GM12878 (cell line): ENCODE measurements at regions of chr1 and their contacts with region 1.

Region 1: DNA sequence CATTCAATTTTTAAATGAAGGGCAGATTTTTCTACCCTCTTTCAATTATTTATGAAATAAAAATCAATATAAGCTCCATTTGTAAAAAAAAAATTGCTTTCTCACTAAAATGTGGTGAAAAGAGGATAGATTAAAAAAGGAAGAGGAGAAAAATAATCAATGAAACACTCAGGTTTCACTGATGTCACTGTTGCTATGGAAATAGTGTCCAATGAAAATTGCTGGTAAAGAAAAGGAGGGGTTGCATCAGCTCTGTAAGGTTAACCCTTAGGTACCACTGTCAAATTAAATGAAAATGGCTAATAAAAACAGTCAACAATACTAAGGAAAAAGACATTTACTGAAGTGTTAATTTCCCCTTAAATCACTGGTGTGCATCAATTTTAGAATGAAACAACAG is 91.6 kb upstream of the TTC39A start:
- DNase-seq: no peak
- ATAC-seq: peak; percentile 88
- H3K4me3 ChIP-seq: no peak overlapping the region
- H3K27ac ChIP-seq: no peak overlapping the region
- H3K4me1 ChIP-seq: no peaks in the 10 kb centered on the region
- H3K27me3 ChIP-seq: no peaks in the 10 kb centered on the region
- CTCF ChIP-seq: no peak
- EP300 ChIP-seq: no peak
- POLR2A ChIP-seq: no peak
- RAD21 ChIP-seq: no peak

Region 2: GRCh38 chr1:51070640-51071039 is 351.3 kb before region 1 on chr1:
- CTCF ChIA-PET with region 1: no interaction called
- POLR2A ChIA-PET with region 1: no interaction called
- RAD21 ChIA-PET with region 1: no interaction called
- SMC1A ChIA-PET with region 1: no interaction called
- in situ Hi-C with region 1: no loop called
- intact Hi-C with region 1: no loop called
- DNase-seq: no peak
- ATAC-seq: no peak
- H3K4me3 ChIP-seq: no peak overlapping the region
- H3K27ac ChIP-seq: no peak overlapping the region
- H3K4me1 ChIP-seq: no peaks in the 10 kb centered on the region
- H3K27me3 ChIP-seq: no peaks in the 10 kb centered on the region
- CTCF ChIP-seq: no peak
- EP300 ChIP-seq: no peak
- POLR2A ChIP-seq: no peak
- RAD21 ChIP-seq: no peak

Region 3: GRCh38 chr1:51325878-51326755 is 95.8 kb before region 1 on chr1:
- CTCF ChIA-PET with region 1: no interaction called
- POLR2A ChIA-PET with region 1: no interaction called
- RAD21 ChIA-PET with region 1: no interaction called
- SMC1A ChIA-PET with region 1: no interaction called
- in situ Hi-C with region 1: no loop called
- intact Hi-C with region 1: no loop called
- DNase-seq: no peak
- ATAC-seq: peak; percentile 24; the same call in 2 of the 3 replicates
- H3K4me3 ChIP-seq: no peak overlapping the region
- H3K27ac ChIP-seq: no peak overlapping the region
- H3K4me1 ChIP-seq: peaks cover 6% of the 10 kb centered on the region
- H3K27me3 ChIP-seq: peaks cover 2 to 4% of the 10 kb centered on the region in 2 experiments; a peak in 3 of 4 replicates
- CTCF ChIP-seq: no peak
- EP300 ChIP-seq: no peak
- POLR2A ChIP-seq: no peak
- RAD21 ChIP-seq: no peak

Region 4: GRCh38 chr1:51433269-51433971 is 11.5 kb after region 1 on chr1:
- CTCF ChIA-PET with region 1: interaction called, 5 read pairs
- POLR2A ChIA-PET with region 1: no interaction called
- RAD21 ChIA-PET with region 1: no interaction called
- SMC1A ChIA-PET with region 1: interaction called, 10 read pairs
- in situ Hi-C with region 1: no loop called
- intact Hi-C with region 1: no loop called
- DNase-seq: no peak
- ATAC-seq: no peak; the same call in 2 of the 3 replicates
- H3K4me3 ChIP-seq: no peak overlapping the region
- H3K27ac ChIP-seq: peak overlapping the region; percentile 42; the same call in 1 of the 2 replicates
- H3K4me1 ChIP-seq: peaks cover 16% of the 10 kb centered on the region
- H3K27me3 ChIP-seq: no peaks in the 10 kb centered on the region
- CTCF ChIP-seq: no peak
- EP300 ChIP-seq: no peak
- POLR2A ChIP-seq: no peak
- RAD21 ChIP-seq: no peak